ENCODE measurements at regions of chr6 and their contacts with region 1.

Region 1: DNA sequence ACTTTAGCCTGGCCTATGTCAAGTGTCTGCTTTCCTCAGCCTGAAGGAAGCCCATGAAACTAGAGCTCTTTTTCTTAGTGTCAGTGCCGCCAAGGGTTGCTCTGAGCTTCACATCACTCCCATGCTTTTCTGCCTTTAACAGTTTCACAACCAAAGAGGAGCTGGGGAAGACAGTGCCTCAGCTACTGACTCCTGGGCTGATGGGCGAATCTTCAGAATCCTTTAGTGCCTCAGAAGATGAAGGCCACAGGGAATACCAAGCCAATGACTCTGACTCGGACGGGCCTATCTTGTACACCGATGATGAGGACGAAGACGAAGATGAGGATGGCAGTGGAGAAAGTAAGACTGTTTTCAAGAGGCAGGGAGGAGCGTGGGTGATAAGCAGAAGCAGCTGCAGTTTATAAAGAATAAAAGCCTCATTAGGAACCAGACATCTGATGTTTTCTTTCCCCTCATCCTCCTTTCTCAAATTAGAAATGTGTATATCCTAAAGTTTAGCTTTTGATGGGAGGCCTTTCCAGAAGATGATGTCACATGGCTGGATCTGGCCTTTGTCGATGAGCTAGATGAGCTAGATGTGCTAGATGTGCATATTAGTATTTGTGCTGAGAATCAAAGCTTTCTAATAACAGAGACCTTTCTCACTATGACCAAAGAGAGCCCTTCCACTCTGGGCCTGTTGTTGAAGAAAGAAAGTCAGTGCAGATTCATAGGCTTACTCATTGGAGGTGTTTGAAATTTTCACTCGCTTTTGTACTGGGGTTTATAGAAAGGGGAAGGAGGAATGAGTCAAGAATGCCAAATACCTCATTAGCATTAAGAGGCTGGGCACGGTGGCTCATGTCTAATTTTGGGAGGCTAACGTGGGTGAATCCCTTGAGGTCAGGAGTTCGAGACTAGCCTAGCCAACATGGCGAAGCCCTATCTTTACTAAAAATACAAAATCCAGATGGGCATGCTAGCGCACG is 70.7 kb upstream of the LTV1 start:
- DNase-seq: no peak
- ATAC-seq: peak; percentile 64

Region 2: GRCh38 chr6:143842902-143843676 is 70.7 kb after region 1 on chr6 and contains the start of gene LTV1:
- intact Hi-C with region 1: loop called (anchors 5 kb)
- DNase-seq: peak; percentile 98
- ATAC-seq: peak; percentile 100
- total RNA-seq, gene LTV1: 12.4 TPM